ENCODE measurements at regions of chr14 and their contacts with region 1.

Region 1: GRCh38 chr14:59454131-59454530 is 11.0 kb downstream of the GPR135 start:
- DNase-seq: no peak
- ATAC-seq: no peak
- H3K4me3 ChIP-seq: no peak overlapping the region
- H3K27ac ChIP-seq: no peak overlapping the region
- H3K4me1 ChIP-seq: no peaks in the 10 kb centered on the region
- H3K27me3 ChIP-seq: no peaks in the 10 kb centered on the region
- CTCF ChIP-seq: no peak
- POLR2A ChIP-seq: no peak

Region 2: DNA sequence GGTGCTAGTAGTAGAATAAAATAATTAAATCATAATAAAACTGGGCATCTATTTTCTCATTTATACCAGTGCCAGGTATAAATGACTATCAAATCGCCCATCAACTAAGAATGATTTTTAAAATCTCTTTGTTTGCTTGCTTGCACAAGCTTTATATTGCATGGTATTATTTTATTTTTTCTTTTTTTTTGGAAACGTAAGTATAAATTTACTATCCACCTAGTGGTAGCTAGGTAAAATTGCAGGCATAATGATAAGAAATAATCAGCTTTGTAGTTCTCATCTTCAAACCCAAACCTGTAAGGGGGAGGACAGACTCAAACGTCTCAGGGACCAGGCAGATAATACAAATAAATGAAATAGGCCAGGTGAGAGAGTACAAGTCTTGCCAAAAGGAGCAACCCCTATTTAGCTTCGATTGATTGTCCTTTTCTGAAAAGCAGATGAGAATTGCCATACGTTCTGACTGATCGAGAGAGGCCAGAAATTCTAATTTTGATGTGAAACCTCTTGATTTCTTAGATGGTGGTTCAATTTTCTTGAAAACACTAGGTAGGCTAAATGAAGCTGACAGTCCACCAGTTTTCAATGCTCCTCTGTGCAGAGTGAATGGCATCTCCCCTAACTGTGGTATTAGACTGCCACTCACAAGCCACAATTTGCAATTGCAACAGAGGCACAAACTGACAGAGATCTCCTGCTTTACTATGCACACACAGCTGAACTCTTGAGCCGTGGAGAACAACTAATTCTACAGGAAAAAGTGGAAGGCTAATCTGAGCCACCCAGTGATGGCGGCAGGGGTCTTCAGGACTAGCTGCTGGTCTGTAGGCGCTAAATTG is 627.1 kb before region 1 on chr14:
- intact Hi-C with region 1: no loop called
- DNase-seq: no peak
- ATAC-seq: peak in 3 of 4 donors; percentile 36 to 51 (median 51)
- H3K4me3 ChIP-seq: no peak overlapping the region
- H3K27ac ChIP-seq: no peak overlapping the region
- H3K4me1 ChIP-seq: peaks cover 0 to 7% (median 0%) of the 10 kb centered on the region in 4 donors
- H3K27me3 ChIP-seq: no peaks in the 10 kb centered on the region
- CTCF ChIP-seq: peak in 3 of 4 donors; percentile 8 to 26 (median 11)
- POLR2A ChIP-seq: no peak

Region 3: GRCh38 chr14:59126710-59127432 is 327.3 kb before region 1 on chr14:
- intact Hi-C with region 1: loop called in 1 of 2 experiments (anchors 5 kb)
- DNase-seq: no peak
- ATAC-seq: peak; percentile 94 to 99 (median 96)
- H3K4me3 ChIP-seq: no peak overlapping the region
- H3K27ac ChIP-seq: no peak overlapping the region
- H3K4me1 ChIP-seq: no peaks in the 10 kb centered on the region
- H3K27me3 ChIP-seq: no peaks in the 10 kb centered on the region
- CTCF ChIP-seq: peak; percentile 70 to 86 (median 82)
- POLR2A ChIP-seq: no peak

Region 4: DNA sequence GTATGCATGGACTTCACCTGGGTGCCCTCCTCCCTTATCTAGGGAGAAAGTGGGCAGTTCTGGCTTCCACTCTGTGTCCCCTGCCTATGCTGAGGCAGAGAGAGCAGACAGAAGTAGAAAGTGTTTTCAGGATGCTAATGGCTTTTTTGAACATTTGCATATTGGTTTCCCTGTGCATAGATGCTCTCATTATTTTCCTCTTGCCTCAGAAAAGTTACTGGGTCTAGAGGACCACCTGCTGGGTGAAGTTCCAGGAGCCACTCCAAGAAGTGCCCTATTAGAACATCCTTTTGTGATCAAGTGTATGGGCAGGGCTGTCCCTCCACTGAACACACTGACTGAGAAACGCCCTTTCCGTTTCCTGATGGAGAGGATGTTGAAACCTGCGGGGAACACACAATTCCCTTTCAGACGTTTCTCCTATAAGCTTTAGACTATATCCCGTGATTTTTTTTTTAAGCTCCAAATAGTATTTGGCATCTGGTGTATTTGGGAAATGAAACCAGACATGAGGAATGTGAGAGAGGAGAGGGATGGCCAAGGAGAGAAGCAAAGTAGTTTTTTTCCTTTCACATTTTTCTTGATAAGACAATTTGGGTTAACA is 199.1 kb before region 1 on chr14:
- intact Hi-C with region 1: no loop called
- DNase-seq: no peak
- ATAC-seq: peak; percentile 51 to 69 (median 57)
- H3K4me3 ChIP-seq: no peak overlapping the region
- H3K27ac ChIP-seq: peak overlapping the region; percentile 12 to 60 (median 25)
- H3K4me1 ChIP-seq: peaks cover 0 to 16% (median 7%) of the 10 kb centered on the region in 4 donors
- H3K27me3 ChIP-seq: no peaks in the 10 kb centered on the region
- CTCF ChIP-seq: no peak
- POLR2A ChIP-seq: no peak

Region 5: DNA sequence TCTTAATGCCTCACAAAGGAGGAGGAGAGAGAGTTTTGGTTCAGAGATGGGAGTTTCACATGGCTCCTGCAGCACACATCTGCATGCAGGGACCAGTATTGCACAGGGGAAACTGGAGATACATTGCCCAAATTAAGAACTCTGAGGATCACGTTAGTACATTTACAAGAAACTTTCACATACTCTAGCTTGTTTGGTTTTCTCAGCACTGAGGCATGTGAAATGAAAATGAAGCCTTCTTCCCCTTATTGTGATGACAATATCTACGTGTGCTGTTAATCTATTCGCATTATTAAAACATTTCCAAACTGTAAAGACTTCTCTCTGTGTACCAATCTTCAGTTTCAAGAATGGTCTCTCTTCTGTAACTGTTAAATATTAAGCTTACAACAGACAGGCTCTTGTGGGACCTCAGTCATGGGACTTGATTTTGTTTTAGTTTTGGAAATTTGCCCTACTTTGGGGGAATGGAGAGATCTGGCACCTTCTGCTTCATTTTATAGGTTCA is 140.9 kb before region 1 on chr14:
- intact Hi-C with region 1: no loop called
- DNase-seq: no peak
- ATAC-seq: peak; percentile 12 to 67 (median 31)
- H3K4me3 ChIP-seq: no peak overlapping the region
- H3K27ac ChIP-seq: peak overlapping the region; percentile 30 to 82 (median 53)
- H3K4me1 ChIP-seq: peaks cover 2 to 76% (median 30%) of the 10 kb centered on the region in 4 donors
- H3K27me3 ChIP-seq: no peaks in the 10 kb centered on the region
- CTCF ChIP-seq: no peak
- POLR2A ChIP-seq: no peak

Region 6: DNA sequence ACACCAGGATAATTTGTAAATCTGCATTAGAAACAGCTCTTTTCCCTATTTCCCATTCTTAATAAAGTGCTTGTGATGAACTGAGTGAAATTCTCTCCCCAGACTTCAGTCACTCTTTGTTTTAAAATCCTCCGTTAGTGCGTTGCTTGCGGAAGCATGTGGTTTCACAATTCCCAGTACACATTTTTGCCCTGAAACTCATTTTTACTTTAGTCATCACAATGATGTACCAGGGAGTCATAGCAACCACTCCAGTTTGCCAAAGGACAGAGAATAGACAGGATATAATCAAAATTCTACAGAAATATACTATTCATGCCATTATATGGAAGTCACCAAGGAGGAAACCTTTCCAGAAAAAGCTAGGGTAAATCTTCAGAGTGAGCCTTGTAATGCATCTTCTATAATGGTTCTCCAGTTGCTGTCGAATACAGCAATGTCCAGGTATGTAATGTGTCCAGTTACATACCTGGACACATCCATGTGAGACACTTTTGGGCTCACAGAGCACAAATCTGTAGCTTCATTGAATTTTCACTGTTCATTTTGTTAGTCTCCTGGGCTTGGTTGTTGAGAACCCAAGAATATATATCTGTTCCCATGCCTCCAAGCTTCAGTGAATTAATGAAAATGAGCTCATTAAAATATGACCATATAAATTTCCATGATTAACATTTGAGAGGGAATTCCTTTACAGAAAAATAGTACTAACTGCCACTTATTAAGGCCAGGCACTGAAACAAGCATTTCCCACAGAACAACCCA is 46.7 kb before region 1 on chr14:
- intact Hi-C with region 1: no loop called
- DNase-seq: no peak
- ATAC-seq: peak; percentile 45 to 80 (median 66)
- H3K4me3 ChIP-seq: no peak overlapping the region
- H3K27ac ChIP-seq: peak overlapping the region; percentile 9 to 49 (median 45)
- H3K4me1 ChIP-seq: peaks cover 0 to 7% (median 3%) of the 10 kb centered on the region in 4 donors
- H3K27me3 ChIP-seq: no peaks in the 10 kb centered on the region
- CTCF ChIP-seq: no peak
- POLR2A ChIP-seq: no peak